Activated T-helper 1 cell treated with anti-CD3 and anti-CD28 coated beads, Interleukin-12 subunit alpha, Interleukin-12 subunit beta, Interleukin-2, Interleukin-4 antibody, amounts not matched to agents 30 ng/mL and 10 ng/mL and 1 ng/mL, durations not matched to agents 14 hours and 24 hours and 36 hours (primary cell): ENCODE measurements at regions of chr16 and their contacts with region 1.

Region 1: GRCh38 chr16:58198022-58198683 is at the start of gene CSNK2A2:
- DNase-seq: peak; percentile 58
- H3K4me3 Mint-ChIP-seq: peak within 1 kb of the TSS; percentile 92
- H3K27ac Mint-ChIP-seq: peak within 1 kb of the TSS; percentile 79
- H3K4me1 Mint-ChIP-seq: peaks cover 34% of the 10 kb centered on the region
- H3K27me3 Mint-ChIP-seq: peaks cover 6% of the 10 kb centered on the region
- total RNA-seq, gene CSNK2A2: 93.1 and 99.6 TPM in 2 replicates

Region 2: DNA sequence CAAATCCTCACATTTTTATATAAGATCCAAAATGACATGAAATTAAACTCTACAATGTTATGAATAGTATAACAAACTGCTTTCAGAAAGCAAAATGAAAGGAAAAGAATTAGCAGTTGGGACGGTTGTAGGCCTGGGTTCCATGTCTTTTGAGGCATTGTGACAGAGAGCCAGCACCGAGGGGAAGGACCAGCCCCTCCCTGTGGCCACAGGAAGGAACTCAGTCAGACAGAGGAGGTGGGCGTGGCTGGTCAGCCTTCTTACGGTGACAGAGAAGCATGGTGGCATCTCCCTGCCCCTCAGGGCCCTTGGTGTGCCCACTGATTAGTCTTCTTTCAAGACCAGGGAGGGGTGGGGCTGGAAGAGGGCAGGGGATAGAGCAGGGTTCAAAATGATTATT is 203.4 kb before region 1 on chr16:
- intact Hi-C with region 1: loop called (anchors 5 kb)
- DNase-seq: peak; percentile 24
- H3K4me3 Mint-ChIP-seq: no peak overlapping the region
- H3K27ac Mint-ChIP-seq: no peak overlapping the region
- H3K4me1 Mint-ChIP-seq: peaks cover 32% of the 10 kb centered on the region
- H3K27me3 Mint-ChIP-seq: no peaks in the 10 kb centered on the region

Region 3: DNA sequence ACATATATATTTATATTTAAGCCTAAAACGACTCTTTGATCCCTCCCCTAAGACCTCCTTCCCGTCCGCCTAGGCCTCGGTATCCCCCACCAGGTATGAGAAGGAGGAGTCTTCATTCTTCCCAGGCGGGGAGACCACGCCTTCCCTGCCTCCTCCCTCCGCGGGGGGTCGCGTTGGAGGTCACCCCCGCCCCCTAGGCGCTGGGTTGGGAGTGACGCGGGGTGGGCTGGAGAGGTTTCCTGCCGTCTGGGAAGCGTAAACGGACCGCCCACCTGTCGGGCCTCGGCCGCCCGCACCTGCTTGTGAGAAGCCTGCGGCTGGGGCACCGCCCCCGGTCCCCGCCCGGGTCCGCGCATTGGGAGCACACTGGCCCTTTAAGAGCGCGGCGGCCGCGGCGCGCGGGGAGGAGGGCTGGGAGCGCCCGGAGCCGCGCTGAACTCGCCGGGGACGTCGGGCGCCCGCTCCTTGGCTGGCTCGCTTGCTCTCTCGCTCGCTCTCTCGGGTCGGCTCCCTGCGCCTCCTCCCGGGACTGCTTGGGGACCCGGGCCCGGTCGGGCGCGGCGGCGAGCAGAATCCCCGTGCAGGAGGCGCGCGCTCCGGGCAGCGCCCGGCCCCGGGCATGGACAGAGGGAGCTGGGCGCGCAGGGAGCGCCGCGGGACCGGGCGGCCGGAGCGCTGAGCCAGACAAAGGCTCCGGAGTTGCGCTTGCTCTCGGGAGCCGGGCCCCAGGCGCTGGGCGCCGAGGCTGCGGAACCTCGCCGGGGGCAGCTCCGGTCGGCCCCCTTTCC is 172.6 kb before region 1 on chr16 and contains the start of gene MMP15:
- intact Hi-C with region 1: loop called (anchors 1 kb)
- DNase-seq: peak; percentile 51
- H3K4me3 Mint-ChIP-seq: peak within 1 kb of the TSS; percentile 89
- H3K27ac Mint-ChIP-seq: peak within 1 kb of the TSS; percentile 77
- H3K4me1 Mint-ChIP-seq: peaks cover 13% of the 10 kb centered on the region
- H3K27me3 Mint-ChIP-seq: peaks cover 28% of the 10 kb centered on the region
- total RNA-seq, gene MMP15: 1.1 and 1.3 TPM in 2 replicates

Region 4: DNA sequence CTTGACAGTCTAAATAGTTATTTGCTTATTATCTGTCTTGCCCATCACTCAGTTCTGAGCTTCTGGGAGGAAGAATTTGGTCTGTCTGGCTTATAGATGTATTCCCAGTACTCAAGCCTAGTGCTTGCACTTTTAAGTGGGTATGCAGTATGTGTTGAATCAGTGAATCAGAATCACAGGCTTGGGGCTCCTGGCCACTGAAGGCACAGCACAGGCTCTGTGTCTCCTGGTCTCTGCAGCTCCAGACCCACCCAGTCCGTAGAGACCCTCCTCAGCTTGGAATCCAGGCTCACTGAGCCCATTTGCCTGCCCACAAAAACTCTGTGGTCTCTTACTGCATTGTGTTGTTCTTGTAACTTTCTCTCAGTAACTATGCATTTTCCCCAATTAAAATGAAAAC is 49.6 kb before region 1 on chr16:
- intact Hi-C with region 1: no loop called
- DNase-seq: no peak
- H3K4me3 Mint-ChIP-seq: no peak overlapping the region
- H3K27ac Mint-ChIP-seq: no peak overlapping the region
- H3K4me1 Mint-ChIP-seq: no peaks in the 10 kb centered on the region
- H3K27me3 Mint-ChIP-seq: peaks cover 3% of the 10 kb centered on the region

Region 5: DNA sequence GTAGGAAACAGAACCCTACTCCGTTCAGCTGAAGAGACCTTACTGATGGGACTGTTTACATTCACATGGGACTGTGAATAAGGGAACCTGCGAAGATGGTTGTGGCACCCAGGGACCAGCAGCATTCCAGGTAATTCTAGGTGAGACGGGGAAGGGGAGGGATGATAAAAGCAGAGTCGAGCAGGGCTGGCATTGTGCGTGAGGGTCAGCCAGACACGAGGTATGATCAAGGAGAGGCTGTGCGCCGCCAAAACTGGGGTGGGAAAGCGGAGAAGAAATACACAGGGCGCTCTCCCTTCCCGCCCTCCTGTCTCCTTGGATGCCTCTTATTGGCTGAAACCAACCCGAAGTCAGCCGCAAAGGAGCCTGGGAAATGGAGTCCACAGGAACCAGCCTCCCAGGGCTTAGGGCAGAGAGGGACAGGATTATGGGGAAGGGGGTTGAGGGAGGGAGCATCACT is 38.1 kb after region 1 on chr16:
- intact Hi-C with region 1: loop called (anchors 1 kb)
- DNase-seq: peak; percentile 52
- H3K4me3 Mint-ChIP-seq: peak overlapping the region; percentile 81
- H3K27ac Mint-ChIP-seq: no peak overlapping the region
- H3K4me1 Mint-ChIP-seq: peaks cover 13% of the 10 kb centered on the region
- H3K27me3 Mint-ChIP-seq: peaks cover 31% of the 10 kb centered on the region

Region 6: DNA sequence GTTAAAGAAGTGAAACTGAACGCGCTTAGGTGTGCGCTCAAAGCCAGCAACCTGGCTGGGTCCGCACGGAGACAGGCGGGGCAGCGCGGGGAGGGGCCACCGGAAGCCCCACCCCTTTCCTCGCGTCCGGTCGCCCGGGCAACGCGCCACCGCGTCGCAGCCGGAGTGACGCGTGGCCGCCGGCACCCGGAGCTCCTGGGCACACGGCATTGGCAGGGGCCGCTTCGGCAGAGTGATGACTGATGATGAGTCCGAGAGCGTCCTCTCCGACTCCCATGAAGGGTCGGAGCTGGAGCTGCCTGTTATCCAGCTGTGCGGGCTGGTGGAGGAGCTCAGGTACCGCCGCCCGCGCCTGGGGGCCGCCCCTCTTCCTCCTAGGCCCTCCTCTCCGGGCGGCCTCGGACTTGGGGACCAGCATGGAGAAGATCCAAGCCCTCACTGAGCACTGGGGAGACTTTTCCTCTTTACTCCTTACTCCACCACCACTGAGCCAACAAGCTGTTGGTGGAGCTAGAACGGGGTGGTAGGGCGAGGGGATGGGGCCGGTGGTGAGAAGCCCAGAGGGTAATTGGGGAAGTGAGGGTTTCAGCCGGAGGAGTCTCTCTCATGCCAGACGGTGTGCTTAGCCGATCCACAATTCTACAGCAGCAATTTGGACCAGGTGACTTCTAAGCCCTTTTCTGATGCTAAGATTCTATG is 51.8 kb after region 1 on chr16:
- intact Hi-C with region 1: loop called (anchors 1 kb)
- DNase-seq: peak; percentile 83
- H3K4me3 Mint-ChIP-seq: peak overlapping the region; percentile 86
- H3K27ac Mint-ChIP-seq: no peak overlapping the region
- H3K4me1 Mint-ChIP-seq: peaks cover 6% of the 10 kb centered on the region
- H3K27me3 Mint-ChIP-seq: peaks cover 4% of the 10 kb centered on the region

Region 7: DNA sequence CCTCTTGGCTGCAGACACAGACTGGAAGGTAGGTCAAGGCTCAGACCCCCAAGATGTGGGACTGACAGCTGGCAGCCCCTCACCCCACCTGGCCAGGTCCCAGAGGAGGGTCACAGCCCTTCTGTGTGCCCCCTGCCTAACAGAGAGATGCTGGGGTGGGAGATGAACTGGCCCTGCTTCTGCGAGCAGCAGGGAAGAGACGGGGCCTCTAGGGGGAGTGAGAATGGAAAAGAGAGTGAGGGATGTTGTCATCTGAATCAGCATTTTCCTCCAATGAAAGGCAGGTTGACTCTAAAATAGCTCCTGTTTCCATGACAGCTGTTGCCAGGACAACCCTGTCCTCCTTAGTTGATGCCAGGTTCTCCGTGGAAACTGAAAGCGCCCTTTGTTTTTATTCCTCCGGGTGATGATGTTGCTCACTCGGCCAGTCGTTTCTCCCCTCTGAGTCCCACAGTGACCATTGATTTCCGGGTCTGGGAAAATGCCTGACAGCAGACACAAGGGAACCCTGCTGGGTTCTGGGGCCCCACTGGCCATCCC is 296.9 kb after region 1 on chr16:
- intact Hi-C with region 1: loop called (anchors 5 kb)
- DNase-seq: peak; percentile 65
- H3K4me3 Mint-ChIP-seq: no peak overlapping the region
- H3K27ac Mint-ChIP-seq: peak overlapping the region; percentile 87
- H3K4me1 Mint-ChIP-seq: peaks cover 9% of the 10 kb centered on the region
- H3K27me3 Mint-ChIP-seq: peaks cover 1% of the 10 kb centered on the region

Region 8: DNA sequence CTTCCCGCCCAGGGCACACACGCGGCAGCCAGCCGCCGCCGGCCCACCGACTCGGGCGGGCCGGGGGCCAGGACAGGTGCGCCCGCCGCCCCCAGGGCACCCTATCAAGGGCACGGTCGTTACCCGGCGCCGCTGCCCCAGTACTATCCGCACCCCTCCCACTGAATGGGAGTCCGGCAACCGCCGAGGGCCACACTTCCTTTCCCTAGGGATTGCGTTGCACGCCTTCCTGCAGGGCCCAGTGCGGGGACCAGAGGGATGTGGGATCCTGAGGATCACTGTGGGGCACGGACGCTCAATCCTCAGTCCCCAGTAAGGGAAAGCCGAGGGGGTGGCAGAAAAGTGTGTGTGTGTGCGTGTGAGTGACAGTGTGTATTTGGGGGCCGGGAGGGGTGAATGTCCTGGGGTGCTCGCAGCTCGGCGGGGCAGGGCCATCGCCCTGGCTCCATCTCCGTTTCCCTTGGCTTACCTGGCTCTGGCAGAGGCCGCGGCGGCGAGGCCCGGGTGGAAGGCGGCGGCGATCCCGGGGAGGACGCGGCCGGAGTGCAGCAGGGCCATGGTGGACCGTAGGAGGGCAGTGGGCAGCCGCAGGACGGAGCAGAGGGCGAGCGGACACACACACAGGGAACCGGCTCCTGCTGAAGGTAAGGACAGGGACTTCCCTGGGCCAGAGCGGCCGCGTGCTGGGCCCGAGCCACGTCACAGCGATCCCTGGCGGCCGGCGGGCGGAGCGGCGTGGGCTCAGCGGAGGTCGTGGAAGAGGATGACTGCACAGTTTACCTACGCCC is 535.7 kb after region 1 on chr16 and contains the start of gene GOT2:
- intact Hi-C with region 1: loop called (anchors 10 kb)
- DNase-seq: peak; percentile 78
- H3K4me3 Mint-ChIP-seq: peak within 1 kb of the TSS; percentile 100
- H3K27ac Mint-ChIP-seq: peak within 1 kb of the TSS; percentile 99
- H3K4me1 Mint-ChIP-seq: peaks cover 27% of the 10 kb centered on the region
- H3K27me3 Mint-ChIP-seq: no peaks in the 10 kb centered on the region
- total RNA-seq, gene GOT2: 135 and 137 TPM in 2 replicates